Endothelial cell of umbilical vein (primary cell): ENCODE measurements at regions of chr2 and their contacts with region 1.

Region 1: GRCh38 chr2:200329798-200330197 is 23.3 kb downstream of the SPATS2L start:
- DNase-seq: no peak
- H3K4me3 ChIP-seq: no peak overlapping the region
- H3K27ac ChIP-seq: no peak overlapping the region
- H3K4me1 ChIP-seq: no peaks in the 10 kb centered on the region
- H3K27me3 ChIP-seq: no peaks in the 10 kb centered on the region
- CTCF ChIP-seq: no peak
- POLR2A ChIP-seq: no peak

Region 2: GRCh38 chr2:199303728-199304177 is 1026.0 kb before region 1 on chr2:
- CTCF ChIA-PET with region 1: no interaction called
- POLR2A ChIA-PET with region 1: no interaction called
- dilution Hi-C with region 1: no loop called
- intact Hi-C with region 1: loop called (anchors 5 kb)
- DNase-seq: peak; percentile 53
- H3K4me3 ChIP-seq: no peak overlapping the region
- H3K27ac ChIP-seq: peak overlapping the region; percentile 57
- H3K4me1 ChIP-seq: peaks cover 7% of the 10 kb centered on the region
- H3K27me3 ChIP-seq: no peaks in the 10 kb centered on the region
- CTCF ChIP-seq: no peak
- POLR2A ChIP-seq: no peak